ENCODE measurements at regions of chr5 and their contacts with region 1.

Region 1: GRCh38 chr5:94793113-94793815 is 174.8 kb downstream of the SLF1 start:
- DNase-seq: peak in 6 of 9 donors; percentile 14 to 53 (median 30)
- ATAC-seq: peak; percentile 95
- H3K4me3 ChIP-seq: no peak overlapping the region
- H3K4me3 Mint-ChIP-seq: peak overlapping the region in 8 of 10 donors; percentile 17 to 74 (median 37)
- H3K27ac ChIP-seq: peak overlapping the region; percentile 24
- H3K27ac Mint-ChIP-seq: peak overlapping the region; percentile 22 to 97 (median 80)
- H3K4me1 ChIP-seq: peaks cover 16 to 29% of the 10 kb centered on the region in 2 donors
- H3K4me1 Mint-ChIP-seq: peaks cover 13 to 49% (median 35%) of the 10 kb centered on the region in 7 donors
- H3K27me3 ChIP-seq: no peaks in the 10 kb centered on the region
- H3K27me3 Mint-ChIP-seq: peaks cover 0 to 10% (median 0%) of the 10 kb centered on the region in 5 donors

Region 2: DNA sequence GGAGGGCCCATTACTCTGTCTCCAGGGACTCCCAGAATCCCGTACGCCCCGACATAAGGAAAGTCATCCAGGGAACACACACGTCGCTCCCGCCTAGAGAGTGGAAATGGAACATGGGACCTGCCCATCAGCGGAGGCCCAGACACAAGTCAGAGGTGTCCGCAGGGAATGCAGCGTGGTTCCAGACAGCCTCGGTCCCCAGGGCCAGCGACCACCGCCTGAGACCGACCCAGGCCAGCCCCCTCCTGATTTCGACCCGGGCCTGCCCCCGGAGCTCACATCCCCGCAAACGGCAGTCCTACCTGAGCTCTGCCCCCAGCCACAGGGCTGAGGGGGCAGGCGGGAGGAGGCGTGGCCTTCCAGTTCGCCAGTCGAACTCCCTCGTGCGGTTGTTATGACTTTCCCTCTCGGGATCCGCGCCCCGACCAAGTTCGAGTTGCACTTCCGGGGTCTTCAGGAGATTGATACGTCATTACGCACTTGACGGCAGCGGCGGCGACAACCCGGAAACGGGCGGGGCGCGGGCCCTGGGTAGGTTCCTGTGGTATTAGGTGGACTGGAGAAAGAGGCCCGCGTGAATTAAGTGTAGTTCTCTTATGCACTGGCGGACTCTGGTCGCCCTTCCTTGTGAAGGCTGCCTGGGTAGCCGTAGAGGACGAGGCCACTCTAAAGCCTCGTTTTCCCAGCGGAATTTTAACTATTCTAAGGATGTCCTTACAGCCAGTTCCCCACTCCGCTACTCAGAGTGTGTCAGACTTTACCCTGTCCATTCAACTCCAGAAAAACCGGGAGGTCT is 681.9 kb before region 1 on chr5:
- CTCF ChIA-PET with region 1: no interaction called
- POLR2A ChIA-PET with region 1: no interaction called
- intact Hi-C with region 1: loop called in 1 of 2 experiments (anchors 5 kb)
- DNase-seq: peak; percentile 77 to 93 (median 90)
- ATAC-seq: peak; percentile 96
- H3K4me3 ChIP-seq: peak overlapping the region; percentile 90
- H3K4me3 Mint-ChIP-seq: peak overlapping the region; percentile 88 to 97 (median 95)
- H3K27ac ChIP-seq: peak overlapping the region; percentile 85
- H3K27ac Mint-ChIP-seq: peak overlapping the region; percentile 93 to 97 (median 96)
- H3K4me1 ChIP-seq: peaks cover 8 to 10% of the 10 kb centered on the region in 2 donors
- H3K4me1 Mint-ChIP-seq: peaks cover 21 to 50% (median 47%) of the 10 kb centered on the region in 7 donors
- H3K27me3 ChIP-seq: no peaks in the 10 kb centered on the region
- H3K27me3 Mint-ChIP-seq: peaks cover 0 to 15% (median 14%) of the 10 kb centered on the region in 5 donors

Region 3: DNA sequence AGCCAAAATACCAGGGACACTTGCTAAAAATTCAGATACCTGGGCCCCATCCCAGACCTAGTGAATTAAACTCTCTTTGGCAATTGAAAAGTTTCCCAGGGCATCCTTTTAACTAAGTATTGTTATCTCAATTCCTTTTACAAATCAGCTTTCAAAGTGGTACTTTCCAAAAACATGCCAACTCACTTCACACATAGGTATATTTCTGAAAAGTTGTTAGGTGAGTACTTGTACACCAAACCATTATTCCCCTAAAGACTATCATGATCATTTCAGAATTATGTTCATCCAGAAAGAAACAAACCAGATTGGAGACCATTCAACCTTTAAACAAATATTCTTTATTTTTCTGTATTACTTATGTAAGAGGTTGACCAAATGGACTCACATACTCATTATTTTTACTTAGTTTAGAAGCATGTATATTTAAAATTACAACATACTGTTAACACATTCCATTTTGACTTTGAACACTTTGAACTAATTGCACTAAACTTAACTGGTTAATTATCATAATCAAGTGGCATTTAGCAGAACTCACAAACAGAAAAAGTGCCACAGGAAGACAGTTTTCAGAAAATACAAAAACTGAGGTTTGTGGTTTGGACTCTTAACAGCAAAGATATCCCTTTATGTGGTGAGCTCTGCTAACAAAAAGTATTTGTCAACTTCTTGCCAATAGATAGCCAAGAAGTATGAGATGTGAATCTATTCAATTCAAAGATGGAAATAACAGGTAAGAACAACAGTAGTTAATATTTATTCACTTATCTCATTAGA is 215.6 kb before region 1 on chr5:
- CTCF ChIA-PET with region 1: no interaction called
- POLR2A ChIA-PET with region 1: no interaction called
- intact Hi-C with region 1: loop called in 1 of 2 experiments (anchors 1 kb)
- DNase-seq: peak in 2 of 9 donors; percentile 15 to 23
- ATAC-seq: peak; percentile 62
- H3K4me3 ChIP-seq: no peak overlapping the region
- H3K4me3 Mint-ChIP-seq: peak overlapping the region in 2 of 10 donors; percentile 48 to 84
- H3K27ac ChIP-seq: no peak overlapping the region
- H3K27ac Mint-ChIP-seq: peak overlapping the region in 1 of 9 donors; percentile 77
- H3K4me1 ChIP-seq: peaks cover 0 to 62% of the 10 kb centered on the region in 2 donors
- H3K4me1 Mint-ChIP-seq: peaks cover 8 to 55% (median 18%) of the 10 kb centered on the region in 7 donors
- H3K27me3 ChIP-seq: no peaks in the 10 kb centered on the region
- H3K27me3 Mint-ChIP-seq: no peaks in the 10 kb centered on the region

Region 4: DNA sequence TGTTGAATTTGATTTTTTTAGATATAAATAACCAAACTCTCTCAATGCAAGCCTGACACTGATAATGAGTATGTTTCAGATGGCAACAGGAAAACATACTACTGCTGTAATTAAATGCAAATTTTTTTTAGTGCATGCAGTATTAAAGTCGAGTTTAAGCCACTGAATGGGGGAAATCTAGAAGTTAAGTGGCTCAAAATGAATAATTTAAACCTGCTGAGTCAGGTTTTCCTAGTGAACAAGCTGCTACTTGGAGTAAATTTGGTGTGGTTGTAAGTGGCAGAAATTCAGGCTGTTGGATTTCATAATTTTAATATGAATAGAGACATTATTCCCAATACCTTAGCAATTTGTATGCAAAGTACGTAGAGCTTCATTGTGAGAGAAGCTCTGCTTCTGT is 53.0 kb before region 1 on chr5:
- CTCF ChIA-PET with region 1: no interaction called
- POLR2A ChIA-PET with region 1: no interaction called
- intact Hi-C with region 1: loop called in 1 of 2 experiments (anchors 5 kb)
- DNase-seq: no peak
- ATAC-seq: no peak
- H3K4me3 ChIP-seq: no peak overlapping the region
- H3K4me3 Mint-ChIP-seq: no peak overlapping the region
- H3K27ac ChIP-seq: no peak overlapping the region
- H3K27ac Mint-ChIP-seq: no peak overlapping the region
- H3K4me1 ChIP-seq: no peaks in the 10 kb centered on the region
- H3K4me1 Mint-ChIP-seq: peaks cover 0 to 2% (median 0%) of the 10 kb centered on the region in 7 donors
- H3K27me3 ChIP-seq: no peaks in the 10 kb centered on the region
- H3K27me3 Mint-ChIP-seq: peaks cover 0 to 9% (median 3%) of the 10 kb centered on the region in 5 donors

Region 5: GRCh38 chr5:94807985-94808384 is 14.7 kb after region 1 on chr5:
- CTCF ChIA-PET with region 1: no interaction called
- POLR2A ChIA-PET with region 1: no interaction called
- intact Hi-C with region 1: loop called in 1 of 2 experiments (anchors 2 kb)
- DNase-seq: no peak
- ATAC-seq: no peak
- H3K4me3 ChIP-seq: no peak overlapping the region
- H3K4me3 Mint-ChIP-seq: no peak overlapping the region
- H3K27ac ChIP-seq: no peak overlapping the region
- H3K27ac Mint-ChIP-seq: no peak overlapping the region
- H3K4me1 ChIP-seq: no peaks in the 10 kb centered on the region
- H3K4me1 Mint-ChIP-seq: no peaks in the 10 kb centered on the region
- H3K27me3 ChIP-seq: no peaks in the 10 kb centered on the region
- H3K27me3 Mint-ChIP-seq: peaks cover 0 to 51% (median 4%) of the 10 kb centered on the region in 5 donors

Measured in naive thymus-derived CD4-positive, alpha-beta T cell (primary cell).